ENCODE measurements at regions of chr11 and their contacts with region 1.

Region 1: DNA sequence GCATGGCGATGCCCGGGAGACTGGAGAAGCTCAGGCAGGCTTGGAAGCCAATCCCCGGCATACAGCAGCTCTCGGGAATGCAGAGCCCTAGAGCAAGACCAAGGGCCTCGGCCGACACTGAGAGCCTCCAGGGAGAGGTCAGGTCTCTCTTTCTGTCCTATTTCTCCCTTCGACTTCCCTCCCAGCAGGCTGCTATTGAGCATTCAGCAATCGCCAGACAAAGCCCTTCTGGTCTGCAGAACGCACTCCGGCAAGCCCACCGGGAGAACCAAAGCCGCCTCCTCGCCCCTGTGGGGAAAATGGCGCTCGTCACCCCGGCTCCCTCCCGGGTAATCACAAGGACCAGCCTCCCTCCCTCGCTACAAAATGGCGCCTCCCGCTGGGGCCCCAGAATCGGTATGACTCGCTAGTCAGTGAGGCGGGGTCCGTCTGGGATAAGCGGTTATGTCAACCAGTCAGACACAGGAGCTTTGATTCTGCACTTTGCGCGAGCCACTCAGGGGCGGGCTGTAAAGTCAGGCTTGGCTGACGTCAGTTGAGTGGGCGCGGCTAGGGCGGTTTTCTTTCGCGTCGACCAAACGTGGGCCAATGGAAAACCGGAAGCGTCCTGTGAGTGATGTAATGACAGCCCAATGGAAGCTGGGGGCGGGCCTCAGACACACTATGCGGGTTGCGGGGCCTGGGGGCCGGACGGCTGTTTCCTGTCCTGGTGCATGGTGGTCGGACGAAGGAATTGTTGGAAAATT is at the start of gene ZNF143:
- DNase-seq: peak; percentile 99
- ATAC-seq: peak; percentile 88
- H3K4me3 ChIP-seq: peak within 1 kb of the TSS; percentile 97 to 98 (median 98)
- H3K27ac ChIP-seq: peak within 1 kb of the TSS; percentile 99
- H3K4me1 ChIP-seq: peaks cover 22% of the 10 kb centered on the region
- H3K27me3 ChIP-seq: no peaks in the 10 kb centered on the region; a peak in 1 of 5 replicates
- CTCF ChIP-seq: no peak
- EP300 ChIP-seq: peak; percentile 12 to 15; a peak in 3 of 4 replicates
- POLR2A ChIP-seq: peak; percentile 81 to 87
- RAD21 ChIP-seq: no peak
- total RNA-seq, gene ZNF143: 22.4 and 32.9 TPM in 2 replicates

Region 2: GRCh38 chr11:9265211-9266131 is 195.0 kb before region 1 on chr11 and contains the start of gene DENND5A:
- CTCF ChIA-PET with region 1: no interaction called
- POLR2A ChIA-PET with region 1: interaction called, 23 read pairs
- in situ Hi-C with region 1: no loop called
- intact Hi-C with region 1: no loop called
- DNase-seq: peak; percentile 80
- ATAC-seq: peak; percentile 78
- H3K4me3 ChIP-seq: peak within 1 kb of the TSS; percentile 87 to 96 (median 94)
- H3K27ac ChIP-seq: peak within 1 kb of the TSS; percentile 87
- H3K4me1 ChIP-seq: peaks cover 55% of the 10 kb centered on the region
- H3K27me3 ChIP-seq: no peaks in the 10 kb centered on the region; a peak in 1 of 5 replicates
- CTCF ChIP-seq: peak; percentile 45; the same call in 1 of the 2 replicates
- EP300 ChIP-seq: no peak
- POLR2A ChIP-seq: peak; percentile 65 to 75
- RAD21 ChIP-seq: no peak
- total RNA-seq, gene DENND5A: 57.7 and 63.3 TPM in 2 replicates

Region 3: DNA sequence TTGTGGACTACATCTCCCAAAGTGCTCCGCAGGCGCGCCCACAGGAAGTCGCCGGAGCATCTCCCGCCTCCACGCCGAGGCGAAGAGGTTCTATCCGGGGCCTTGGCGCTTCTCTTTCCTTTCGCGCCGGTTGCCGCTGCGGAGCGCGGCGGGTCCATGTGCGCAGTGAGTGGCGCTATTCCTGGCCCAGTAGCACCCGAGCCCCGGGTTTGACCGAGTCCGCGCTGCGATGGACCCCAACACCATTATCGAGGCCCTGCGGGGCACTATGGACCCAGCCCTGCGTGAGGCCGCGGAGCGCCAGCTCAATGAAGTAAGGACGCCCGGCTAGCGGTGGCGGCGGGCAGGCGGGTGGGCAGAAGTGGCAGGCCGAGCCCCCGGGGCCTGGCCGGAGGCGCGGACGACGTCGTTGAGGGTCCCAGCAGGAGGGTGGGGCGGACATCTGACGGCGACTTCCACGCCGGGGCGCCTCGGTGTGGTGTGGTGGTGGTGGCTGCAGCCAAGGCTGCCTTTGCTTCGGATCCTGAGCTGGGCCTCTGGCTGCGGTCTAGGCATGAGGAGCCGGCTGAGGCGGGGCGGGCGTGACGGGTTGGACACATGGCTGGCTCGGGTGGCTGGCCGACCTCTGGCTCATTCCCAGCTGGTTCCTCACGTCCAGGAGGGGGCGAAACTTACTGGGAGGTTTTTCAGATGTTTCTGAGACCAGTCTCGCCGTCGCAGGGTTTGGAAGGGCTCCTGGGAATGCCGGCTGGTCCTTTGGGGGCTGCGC is 75.8 kb before region 1 on chr11 and contains the start of gene IPO7:
- CTCF ChIA-PET with region 1: no interaction called
- POLR2A ChIA-PET with region 1: interaction called, 37 read pairs
- in situ Hi-C with region 1: no loop called
- intact Hi-C with region 1: no loop called
- DNase-seq: peak; percentile 87
- ATAC-seq: peak; percentile 95
- H3K4me3 ChIP-seq: peak within 1 kb of the TSS; percentile 79 to 96 (median 93)
- H3K27ac ChIP-seq: peak within 1 kb of the TSS; percentile 91
- H3K4me1 ChIP-seq: peaks cover 63% of the 10 kb centered on the region
- H3K27me3 ChIP-seq: no peaks in the 10 kb centered on the region; a peak in 1 of 5 replicates
- CTCF ChIP-seq: peak; percentile 55
- EP300 ChIP-seq: peak in 1 of 2 experiments; percentile 8; a peak in 1 of 4 replicates
- POLR2A ChIP-seq: peak; percentile 92 to 94
- RAD21 ChIP-seq: peak; percentile 28; the same call in 1 of the 2 replicates
- total RNA-seq, gene IPO7: 98.4 and 197 TPM in 2 replicates

Region 4: GRCh38 chr11:9473408-9473807 is 12.9 kb after region 1 on chr11:
- CTCF ChIA-PET with region 1: no interaction called
- POLR2A ChIA-PET with region 1: interaction called, 20 read pairs
- in situ Hi-C with region 1: no loop called
- intact Hi-C with region 1: no loop called
- DNase-seq: no peak
- ATAC-seq: no peak
- H3K4me3 ChIP-seq: no peak overlapping the region
- H3K27ac ChIP-seq: no peak overlapping the region
- H3K4me1 ChIP-seq: no peaks in the 10 kb centered on the region
- H3K27me3 ChIP-seq: no peaks in the 10 kb centered on the region; a peak in 1 of 5 replicates
- CTCF ChIP-seq: no peak
- EP300 ChIP-seq: no peak
- POLR2A ChIP-seq: no peak
- RAD21 ChIP-seq: no peak

Region 5: DNA sequence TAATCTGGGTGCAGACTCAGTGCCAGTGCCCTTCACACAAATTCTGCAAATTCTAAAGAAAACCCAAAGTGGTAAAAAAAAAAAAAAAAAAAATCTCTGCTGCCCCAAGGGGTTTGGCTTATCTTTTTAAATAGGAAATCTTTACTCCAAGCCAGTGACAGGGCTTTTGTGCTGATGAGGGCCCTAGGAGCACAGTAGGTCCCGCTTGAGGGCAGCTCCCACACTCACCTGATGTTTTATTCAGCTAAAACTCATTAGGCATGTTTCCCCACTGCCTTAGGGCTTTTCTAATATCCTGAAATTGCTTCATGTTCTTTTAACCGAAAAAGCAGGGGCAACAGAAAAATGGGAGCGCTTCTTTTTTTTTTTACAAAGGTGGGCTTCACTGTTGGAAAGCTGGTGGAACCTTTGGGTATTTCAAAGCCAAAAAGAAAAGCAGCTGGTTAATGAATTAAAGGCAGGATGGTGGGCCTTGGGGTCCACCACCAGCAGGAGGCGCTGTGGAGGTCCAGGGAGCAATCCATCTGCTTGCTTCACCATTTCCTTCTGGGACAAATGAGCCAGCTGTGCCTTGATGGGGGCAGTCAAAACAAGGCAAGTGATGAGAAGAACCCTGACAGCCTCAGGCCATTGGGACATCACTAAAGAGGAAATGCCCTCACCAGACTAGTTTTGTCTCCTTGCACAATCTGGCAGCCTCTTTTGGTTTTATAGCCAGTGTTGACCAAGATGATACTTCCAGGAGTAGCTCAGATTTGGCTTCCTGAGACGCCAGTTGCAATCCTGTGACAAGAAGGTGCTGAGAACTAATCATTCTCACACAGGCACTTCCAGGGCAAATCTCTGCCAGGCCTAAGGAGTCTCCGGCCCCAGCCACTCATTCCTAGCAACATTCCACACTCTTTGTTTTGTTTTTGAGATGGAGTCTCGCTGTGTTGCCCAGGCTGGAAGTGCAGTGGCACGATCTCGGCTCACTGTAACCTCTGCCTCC is 74.6 kb after region 1 on chr11:
- CTCF ChIA-PET with region 1: no interaction called
- POLR2A ChIA-PET with region 1: interaction called, 12 read pairs
- in situ Hi-C with region 1: no loop called
- intact Hi-C with region 1: no loop called
- DNase-seq: peak; percentile 51
- ATAC-seq: peak; percentile 68
- H3K4me3 ChIP-seq: peak overlapping the region in 2 of 3 experiments; percentile 17 to 30; a peak in 3 of 6 replicates
- H3K27ac ChIP-seq: peak overlapping the region; percentile 12
- H3K4me1 ChIP-seq: peaks cover 50% of the 10 kb centered on the region
- H3K27me3 ChIP-seq: no peaks in the 10 kb centered on the region
- CTCF ChIP-seq: peak; percentile 83
- EP300 ChIP-seq: no peak
- POLR2A ChIP-seq: no peak
- RAD21 ChIP-seq: peak; percentile 81; the same call in 1 of the 2 replicates

Region 6: DNA sequence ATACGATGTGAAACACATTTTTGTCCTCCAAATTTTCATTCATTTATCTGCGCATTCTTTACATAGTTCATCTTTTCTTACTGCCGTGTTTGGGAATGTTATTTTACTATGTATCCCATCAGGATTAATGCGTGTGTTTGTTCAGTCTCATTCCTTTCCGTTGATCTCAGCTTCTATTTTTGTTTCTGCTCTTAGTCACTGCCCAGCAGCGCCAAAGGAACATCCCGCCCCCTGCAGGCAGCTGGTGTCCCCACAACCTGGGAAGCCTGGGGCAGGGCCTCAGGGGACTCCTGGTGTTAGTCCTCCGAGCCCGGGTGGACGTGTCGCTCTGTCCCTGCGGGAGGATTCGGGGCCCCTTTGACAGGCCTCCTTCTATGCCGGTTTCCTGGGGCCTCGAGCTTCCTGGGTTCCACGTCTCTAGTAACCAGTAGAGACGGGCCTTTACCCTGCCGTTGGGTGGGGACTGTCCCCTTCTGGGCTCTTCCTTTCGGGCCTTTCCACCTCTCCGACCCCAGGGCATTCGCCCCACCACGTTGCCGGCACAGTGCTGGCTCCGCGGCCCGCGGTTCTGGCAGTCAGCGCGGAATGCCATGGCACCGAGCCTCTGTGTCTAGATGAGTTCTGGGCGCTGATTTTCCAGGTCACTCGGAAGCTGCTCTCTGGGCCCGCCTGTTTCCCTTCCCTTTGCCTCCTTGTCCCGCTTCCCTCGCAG is 152.8 kb after region 1 on chr11:
- CTCF ChIA-PET with region 1: no interaction called
- POLR2A ChIA-PET with region 1: interaction called, 12 read pairs
- in situ Hi-C with region 1: no loop called
- intact Hi-C with region 1: loop called (anchors 1 kb)
- DNase-seq: peak; percentile 94
- ATAC-seq: peak; percentile 92
- H3K4me3 ChIP-seq: peak overlapping the region; percentile 57 to 69 (median 57)
- H3K27ac ChIP-seq: peak overlapping the region; percentile 76
- H3K4me1 ChIP-seq: peaks cover 66% of the 10 kb centered on the region
- H3K27me3 ChIP-seq: no peaks in the 10 kb centered on the region; a peak in 1 of 5 replicates
- CTCF ChIP-seq: peak; percentile 95
- EP300 ChIP-seq: peak; percentile 53 to 67; a peak in 2 of 4 replicates
- POLR2A ChIP-seq: peak; percentile 57 to 74
- RAD21 ChIP-seq: peak; percentile 87